ENCODE measurements at regions of chr17 and their contacts with region 1.

Region 1: GRCh38 chr17:2416010-2416734 is 15.3 kb upstream of the MNT start:
- DNase-seq: peak; percentile 87
- H3K4me3 Mint-ChIP-seq: no peak overlapping the region
- H3K27ac Mint-ChIP-seq: peak overlapping the region; percentile 5
- H3K4me1 Mint-ChIP-seq: no peaks in the 10 kb centered on the region
- H3K27me3 Mint-ChIP-seq: no peaks in the 10 kb centered on the region

Region 2: DNA sequence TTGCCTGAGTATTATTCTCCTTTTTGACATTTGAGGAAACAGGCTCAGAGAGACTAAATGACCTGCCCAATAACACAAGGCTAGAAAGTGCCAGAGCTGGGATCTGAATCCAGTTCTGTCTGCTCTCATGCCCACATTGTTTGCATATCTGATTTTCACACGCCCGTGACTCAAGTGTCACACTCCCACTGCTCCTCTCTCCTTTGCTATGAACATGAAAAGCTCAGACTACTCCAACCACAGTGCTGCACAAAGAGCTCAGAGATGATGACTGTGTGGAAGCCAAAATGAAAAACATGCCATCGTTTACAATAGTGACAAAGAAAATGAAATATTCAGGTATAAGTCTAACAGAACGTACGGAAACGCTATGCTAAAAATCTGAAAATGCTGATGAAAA is 220.4 kb before region 1 on chr17:
- CTCF ChIA-PET with region 1: no interaction called
- POLR2A ChIA-PET with region 1: no interaction called
- DNase-seq: no peak
- H3K4me3 Mint-ChIP-seq: no peak overlapping the region
- H3K27ac Mint-ChIP-seq: no peak overlapping the region
- H3K4me1 Mint-ChIP-seq: peaks cover 67% of the 10 kb centered on the region
- H3K27me3 Mint-ChIP-seq: no peaks in the 10 kb centered on the region

Region 3: GRCh38 chr17:2392252-2393173 is 23.7 kb before region 1 on chr17:
- CTCF ChIA-PET with region 1: interaction called, 15 read pairs
- POLR2A ChIA-PET with region 1: interaction called, 3 read pairs
- DNase-seq: peak; percentile 96
- H3K4me3 Mint-ChIP-seq: peak overlapping the region; percentile 83
- H3K27ac Mint-ChIP-seq: peak overlapping the region; percentile 95
- H3K4me1 Mint-ChIP-seq: peaks cover 62% of the 10 kb centered on the region
- H3K27me3 Mint-ChIP-seq: no peaks in the 10 kb centered on the region

Region 4: GRCh38 chr17:2401426-2402221 is 14.5 kb before region 1 on chr17:
- CTCF ChIA-PET with region 1: interaction called, 24 read pairs
- POLR2A ChIA-PET with region 1: no interaction called
- DNase-seq: peak; percentile 99
- H3K4me3 Mint-ChIP-seq: peak overlapping the region; percentile 88
- H3K27ac Mint-ChIP-seq: peak overlapping the region; percentile 100
- H3K4me1 Mint-ChIP-seq: peaks cover 51% of the 10 kb centered on the region
- H3K27me3 Mint-ChIP-seq: no peaks in the 10 kb centered on the region

Region 5: GRCh38 chr17:2427215-2427614 is 11.0 kb after region 1 on chr17:
- CTCF ChIA-PET with region 1: interaction called, 13 read pairs
- POLR2A ChIA-PET with region 1: no interaction called
- DNase-seq: no peak
- H3K4me3 Mint-ChIP-seq: no peak overlapping the region
- H3K27ac Mint-ChIP-seq: no peak overlapping the region
- H3K4me1 Mint-ChIP-seq: no peaks in the 10 kb centered on the region
- H3K27me3 Mint-ChIP-seq: no peaks in the 10 kb centered on the region

Measured in activated CD4-positive, alpha-beta T cell treated with anti-CD3 and anti-CD28 coated beads, Interleukin-2, amount 10 ng/mL, durations not matched to agents 7 days and 5 days (primary cell).